Posterior vena cava (tissue), 2 donors: ENCODE measurements at regions of chr2 and their contacts with region 1.

Region 1: DNA sequence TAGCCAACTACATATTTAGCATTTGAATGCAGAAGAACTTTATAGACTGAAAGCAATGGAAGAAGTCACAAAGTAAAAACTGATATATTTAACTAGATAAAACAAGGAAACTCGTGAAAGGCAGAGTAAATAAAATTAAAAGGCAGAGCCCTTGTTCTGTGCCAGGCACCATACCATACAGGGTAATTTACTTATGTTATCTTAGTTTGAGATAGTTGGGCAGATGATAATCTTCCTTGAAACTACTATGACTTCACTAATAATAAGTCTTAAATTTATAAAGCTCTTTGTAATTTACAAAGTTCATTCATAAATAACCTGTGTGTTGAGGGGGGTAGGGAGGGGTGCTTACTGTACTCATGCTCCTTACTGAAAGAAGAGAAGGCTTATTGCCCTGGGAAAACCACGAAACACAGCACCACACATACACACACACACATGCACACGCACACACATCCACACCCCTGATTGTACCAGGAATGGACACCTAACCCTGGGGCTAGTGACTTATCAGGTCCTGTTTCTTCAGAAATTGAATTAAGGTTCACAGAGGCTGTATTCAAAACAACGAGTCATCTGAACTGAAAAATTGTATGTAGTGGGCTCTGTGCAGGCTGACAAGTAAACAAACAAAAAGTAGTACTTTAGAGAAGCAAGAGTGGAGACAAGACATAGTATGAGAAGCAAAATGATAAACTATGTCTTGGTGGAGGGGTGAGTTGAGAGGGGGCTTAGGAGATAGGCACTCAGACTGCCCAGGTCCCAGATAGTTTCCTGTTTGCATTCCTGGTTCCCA is 38.1 kb downstream of the AGFG1 start:
- DNase-seq: no peak

Region 2: DNA sequence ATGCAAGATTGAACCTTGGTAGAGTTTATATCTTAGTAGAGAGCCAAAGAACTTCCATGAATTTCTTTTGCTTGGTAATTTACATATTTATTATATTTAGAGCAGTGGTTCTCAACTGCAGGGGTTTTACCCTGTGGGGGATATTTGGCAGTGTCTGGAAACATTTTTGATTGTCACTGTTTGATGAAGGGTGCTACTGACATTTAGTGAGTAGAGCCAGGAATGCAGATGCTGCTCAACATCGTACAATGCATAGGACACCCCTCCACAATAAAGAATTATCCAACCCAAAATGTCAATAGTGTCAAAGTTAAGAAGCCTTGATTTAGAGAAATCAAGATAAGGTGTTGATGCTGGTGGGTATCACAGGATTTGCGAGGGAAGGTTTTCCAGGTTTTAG is 23.3 kb before region 1 on chr2:
- intact Hi-C with region 1: loop called in 1 of 2 experiments (anchors 1 kb)
- DNase-seq: no peak

Region 3: GRCh38 chr2:227643990-227644551 is 134.0 kb after region 1 on chr2:
- intact Hi-C with region 1: no loop called
- DNase-seq: no peak

Region 4: GRCh38 chr2:228094377-228094921 is 584.4 kb after region 1 on chr2:
- intact Hi-C with region 1: no loop called
- DNase-seq: no peak